ENCODE measurements at regions of chr15 and their contacts with region 1.

Region 1: DNA sequence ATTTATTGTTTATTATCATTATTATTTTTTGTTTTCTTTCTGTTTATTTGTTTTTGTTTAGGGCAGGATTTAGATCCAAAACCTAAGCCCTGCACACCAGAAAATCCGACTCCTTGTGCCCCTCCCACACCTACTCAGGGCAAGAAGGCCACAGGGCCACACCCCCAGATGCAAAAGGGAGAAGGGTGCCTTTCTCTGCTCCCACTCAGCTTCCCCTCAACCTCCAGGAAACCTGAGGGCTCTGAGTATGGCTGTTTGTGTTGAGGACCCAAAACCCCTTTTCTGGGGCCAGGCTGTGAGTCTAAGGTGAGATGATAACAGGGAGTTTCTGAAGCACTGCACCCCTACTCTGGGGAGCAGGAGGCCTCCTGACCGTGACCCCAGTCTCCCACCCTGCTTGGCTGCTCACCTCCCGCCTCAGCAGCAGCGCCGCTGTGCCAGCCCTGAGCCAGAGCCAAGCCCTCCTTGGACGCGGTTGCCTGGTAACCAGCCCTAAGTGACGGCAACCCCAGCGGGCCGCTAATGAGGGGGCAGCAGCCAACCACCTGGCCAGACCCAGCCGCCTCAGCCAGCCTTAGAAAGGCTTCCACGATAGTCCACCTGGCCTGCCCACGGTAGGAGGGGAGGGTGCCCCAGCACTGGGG is 6.4 kb upstream of the C15orf39 start:
- DNase-seq: peak; percentile 84
- ATAC-seq: peak; percentile 88
- H3K4me3 Mint-ChIP-seq: peak overlapping the region; percentile 20; the same call in 1 of the 2 replicates
- H3K27ac Mint-ChIP-seq: no peak overlapping the region
- H3K4me1 Mint-ChIP-seq: peaks cover 42% of the 10 kb centered on the region
- H3K27me3 Mint-ChIP-seq: peaks cover 3% of the 10 kb centered on the region
- CTCF ChIP-seq: no peak

Region 2: GRCh38 chr15:75098371-75098770 is 96.9 kb before region 1 on chr15:
- CTCF ChIA-PET with region 1: no interaction called
- POLR2A ChIA-PET with region 1: no interaction called
- DNase-seq: no peak
- ATAC-seq: no peak
- H3K4me3 Mint-ChIP-seq: no peak overlapping the region
- H3K27ac Mint-ChIP-seq: no peak overlapping the region
- H3K4me1 Mint-ChIP-seq: no peaks in the 10 kb centered on the region
- H3K27me3 Mint-ChIP-seq: peaks cover 2% of the 10 kb centered on the region; the same call in 1 of the 2 replicates
- CTCF ChIP-seq: no peak

Region 3: DNA sequence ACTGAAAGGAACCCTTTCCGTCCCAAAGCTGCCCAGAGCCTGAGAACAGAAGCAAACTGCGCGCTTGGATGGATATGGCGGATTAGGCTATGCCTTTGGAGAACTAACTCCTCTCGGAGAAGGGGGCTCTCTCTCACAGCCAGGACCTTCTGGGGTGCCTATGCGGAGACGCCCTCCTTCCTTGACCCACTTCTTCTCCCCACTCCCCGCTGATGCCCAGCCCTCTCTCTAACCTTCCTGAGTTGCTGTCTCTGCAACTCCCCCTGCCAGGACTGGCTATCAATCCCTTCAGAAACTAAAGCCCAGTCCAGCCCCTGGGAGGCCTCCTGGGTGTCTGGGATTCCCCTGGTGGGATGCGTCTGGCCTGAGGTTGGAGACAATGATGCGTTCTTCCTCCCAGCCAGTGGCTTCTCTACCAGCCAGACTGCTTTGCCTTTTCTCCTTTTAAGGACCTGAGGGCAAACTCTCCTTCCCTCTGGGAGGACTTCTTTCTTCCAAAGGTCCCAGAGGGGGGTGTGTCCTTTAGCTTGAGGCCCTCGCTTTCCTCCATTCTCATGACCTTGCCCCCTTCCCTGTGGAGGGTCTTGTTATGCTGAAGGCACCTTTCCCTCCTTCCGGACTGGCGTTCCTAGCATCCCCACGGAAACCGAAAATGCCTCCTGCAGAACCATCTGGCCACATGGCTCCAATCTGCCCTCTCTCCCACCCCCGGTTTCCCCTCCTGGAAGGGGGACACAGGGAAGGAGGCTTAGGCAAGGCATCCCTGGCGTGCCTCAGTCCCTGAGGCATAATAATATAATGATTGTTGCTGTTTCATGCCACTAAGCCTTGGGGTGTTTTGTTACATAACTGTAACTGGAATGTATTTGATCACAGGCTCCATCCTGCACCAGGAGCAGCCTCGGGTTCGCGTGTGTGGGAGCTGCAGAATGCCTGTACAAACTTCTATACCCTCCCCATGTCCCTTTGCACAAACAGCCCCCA is 56.9 kb before region 1 on chr15:
- CTCF ChIA-PET with region 1: no interaction called
- POLR2A ChIA-PET with region 1: no interaction called
- DNase-seq: no peak
- ATAC-seq: no peak; the same call in 1 of the 2 replicates
- H3K4me3 Mint-ChIP-seq: no peak overlapping the region
- H3K27ac Mint-ChIP-seq: no peak overlapping the region
- H3K4me1 Mint-ChIP-seq: no peaks in the 10 kb centered on the region
- H3K27me3 Mint-ChIP-seq: peaks cover 16% of the 10 kb centered on the region
- CTCF ChIP-seq: no peak

Region 4: GRCh38 chr15:75182187-75183131 is 12.8 kb before region 1 on chr15:
- CTCF ChIA-PET with region 1: interaction called, 24 read pairs
- POLR2A ChIA-PET with region 1: interaction called, 5 read pairs
- DNase-seq: peak; percentile 36
- ATAC-seq: peak; percentile 36
- H3K4me3 Mint-ChIP-seq: no peak overlapping the region
- H3K27ac Mint-ChIP-seq: no peak overlapping the region
- H3K4me1 Mint-ChIP-seq: peaks cover 48% of the 10 kb centered on the region
- H3K27me3 Mint-ChIP-seq: peaks cover 19% of the 10 kb centered on the region
- CTCF ChIP-seq: no peak

Region 5: GRCh38 chr15:75228787-75229186 is 33.5 kb after region 1 on chr15:
- CTCF ChIA-PET with region 1: no interaction called
- POLR2A ChIA-PET with region 1: no interaction called
- DNase-seq: no peak
- ATAC-seq: no peak
- H3K4me3 Mint-ChIP-seq: no peak overlapping the region
- H3K27ac Mint-ChIP-seq: no peak overlapping the region
- H3K4me1 Mint-ChIP-seq: peaks cover 11% of the 10 kb centered on the region
- H3K27me3 Mint-ChIP-seq: peaks cover 39% of the 10 kb centered on the region
- CTCF ChIP-seq: no peak

Measured in WTC11 (cell line).